ENCODE measurements at regions of chr17 and their contacts with region 1.

Region 1: GRCh38 chr17:63714547-63715277 is 14.8 kb upstream of the LIMD2 start:
- DNase-seq: no peak
- H3K4me3 ChIP-seq: no peak overlapping the region
- H3K27ac ChIP-seq: no peak overlapping the region
- H3K4me1 ChIP-seq: no peaks in the 10 kb centered on the region
- H3K27me3 ChIP-seq: no peaks in the 10 kb centered on the region
- CTCF ChIP-seq: no peak

Region 2: DNA sequence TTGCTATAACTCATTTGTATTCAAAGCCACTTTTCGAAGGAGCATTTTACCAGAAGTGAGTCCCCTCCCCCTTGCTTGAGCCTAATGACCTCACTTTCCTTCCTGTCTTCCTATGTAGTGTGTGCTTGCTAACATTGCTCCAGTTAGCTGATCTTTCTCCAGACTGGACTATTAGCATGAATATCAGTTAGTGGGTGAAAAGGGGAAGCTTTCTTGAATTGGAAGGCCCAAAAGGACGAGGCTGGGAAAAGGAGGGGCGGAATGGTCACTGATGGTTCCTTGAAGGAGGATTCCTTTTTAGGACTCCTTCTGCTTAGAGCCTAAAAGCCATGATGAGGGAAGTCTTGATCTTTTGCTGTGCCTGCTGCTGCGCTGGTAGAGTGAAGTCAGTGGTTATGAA is 80.5 kb before region 1 on chr17:
- CTCF ChIA-PET with region 1: no interaction called
- dilution Hi-C with region 1: loop called (anchors 5 kb)
- in situ Hi-C with region 1: no loop called
- intact Hi-C with region 1: no loop called
- DNase-seq: no peak
- H3K4me3 ChIP-seq: no peak overlapping the region
- H3K27ac ChIP-seq: no peak overlapping the region
- H3K4me1 ChIP-seq: no peaks in the 10 kb centered on the region
- H3K27me3 ChIP-seq: no peaks in the 10 kb centered on the region
- CTCF ChIP-seq: no peak

Region 3: GRCh38 chr17:63675607-63676413 is 38.9 kb before region 1 on chr17:
- CTCF ChIA-PET with region 1: no interaction called
- dilution Hi-C with region 1: loop called (anchors 5 kb)
- in situ Hi-C with region 1: no loop called
- intact Hi-C with region 1: no loop called
- DNase-seq: peak; percentile 80
- H3K4me3 ChIP-seq: no peak overlapping the region
- H3K27ac ChIP-seq: no peak overlapping the region
- H3K4me1 ChIP-seq: peaks cover 13% of the 10 kb centered on the region
- H3K27me3 ChIP-seq: no peaks in the 10 kb centered on the region
- CTCF ChIP-seq: no peak

Region 4: DNA sequence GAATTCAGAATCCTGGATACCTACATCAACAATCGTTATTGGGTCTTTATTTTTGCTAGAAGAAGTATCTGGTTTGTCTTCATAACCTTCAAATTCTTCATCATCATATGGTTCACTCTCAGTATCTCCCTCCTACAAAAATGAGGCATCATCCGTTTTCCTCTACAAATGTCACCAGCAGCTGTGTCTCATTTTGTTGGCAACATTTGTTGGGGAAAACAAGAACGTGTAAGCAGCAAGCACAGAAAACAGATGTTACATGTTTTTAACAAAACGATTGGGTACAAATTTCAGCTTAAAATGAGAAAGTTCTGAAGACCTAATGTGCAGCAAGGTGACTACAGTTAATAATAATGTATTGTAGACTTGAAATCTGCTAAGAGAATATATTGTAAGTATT is 50.0 kb after region 1 on chr17:
- CTCF ChIA-PET with region 1: no interaction called
- dilution Hi-C with region 1: loop called (anchors 5 kb)
- in situ Hi-C with region 1: no loop called
- intact Hi-C with region 1: no loop called
- DNase-seq: no peak
- H3K4me3 ChIP-seq: no peak overlapping the region
- H3K27ac ChIP-seq: no peak overlapping the region
- H3K4me1 ChIP-seq: no peaks in the 10 kb centered on the region
- H3K27me3 ChIP-seq: no peaks in the 10 kb centered on the region
- CTCF ChIP-seq: no peak

Measured in mammary epithelial cell (primary cell).